ENCODE measurements at regions of chr2 and their contacts with region 1.

Region 1: GRCh38 chr2:191620145-191620544 is 57.8 kb upstream of the NABP1 start:
- DNase-seq: peak; percentile 31
- H3K4me3 Mint-ChIP-seq: no peak overlapping the region
- H3K27ac Mint-ChIP-seq: peak overlapping the region; percentile 79
- H3K4me1 Mint-ChIP-seq: peaks cover 37% of the 10 kb centered on the region
- H3K27me3 Mint-ChIP-seq: no peaks in the 10 kb centered on the region
- CTCF ChIP-seq: no peak

Region 2: GRCh38 chr2:191631754-191632153 is 11.6 kb after region 1 on chr2:
- CTCF ChIA-PET with region 1: interaction called, 6 read pairs
- POLR2A ChIA-PET with region 1: interaction called, 12 read pairs
- intact Hi-C with region 1: no loop called
- DNase-seq: peak; percentile 93
- H3K4me3 Mint-ChIP-seq: no peak overlapping the region
- H3K27ac Mint-ChIP-seq: no peak overlapping the region
- H3K4me1 Mint-ChIP-seq: peaks cover 60% of the 10 kb centered on the region
- H3K27me3 Mint-ChIP-seq: no peaks in the 10 kb centered on the region
- CTCF ChIP-seq: no peak

Measured in MCF 10A (cell line).